ENCODE measurements at regions of chr2 and their contacts with region 1.

Region 1: GRCh38 chr2:61176755-61177726 is 15.1 kb downstream of the C2orf74 start:
- DNase-seq: peak; percentile 97 to 99
- ATAC-seq: peak; percentile 88 to 94
- H3K4me3 ChIP-seq: peak overlapping the region; percentile 82
- H3K27ac ChIP-seq: peak overlapping the region; percentile 95 to 98
- H3K4me1 ChIP-seq: peaks cover 34% of the 10 kb centered on the region
- CTCF ChIP-seq: peak; percentile 17; the same call in 1 of the 3 replicates
- EP300 ChIP-seq: no peak
- POLR2A ChIP-seq: peak; percentile 98
- RAD21 ChIP-seq: peak in 1 of 2 experiments; percentile 30; a peak in 2 of 5 replicates

Region 2: DNA sequence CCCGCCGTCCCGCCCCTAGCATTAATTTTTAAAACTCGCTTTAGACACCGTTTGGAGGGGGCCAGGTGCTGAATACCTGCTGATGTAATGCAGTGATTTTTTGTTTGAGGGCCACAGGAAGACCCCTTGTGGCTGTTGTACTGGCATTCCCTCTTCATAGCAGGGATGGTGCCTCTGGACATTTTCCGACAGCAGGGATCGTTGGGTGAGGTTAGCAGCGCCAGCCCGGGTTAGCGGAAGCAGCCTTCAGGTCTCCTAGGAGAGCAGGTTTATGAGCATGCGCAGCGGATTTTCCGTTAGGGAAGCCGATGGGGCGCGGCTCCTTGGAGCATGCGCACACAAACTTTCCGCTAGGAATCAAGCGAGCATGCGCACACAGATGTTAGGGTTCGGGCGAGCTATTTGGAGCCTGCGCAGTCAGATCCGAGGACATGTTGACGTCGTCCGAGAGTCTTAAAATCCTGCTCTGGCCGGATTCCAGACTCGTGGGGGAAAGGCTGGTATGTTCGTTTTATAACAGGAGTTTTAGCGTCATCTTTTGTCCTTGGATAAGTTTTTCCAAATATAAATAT is 32.3 kb before region 1 on chr2:
- CTCF ChIA-PET with region 1: interaction called, 3 read pairs
- POLR2A ChIA-PET with region 1: interaction called, 16 read pairs
- DNase-seq: peak; percentile 99
- ATAC-seq: peak; percentile 99
- H3K4me3 ChIP-seq: peak overlapping the region; percentile 56
- H3K27ac ChIP-seq: peak overlapping the region; percentile 79 to 92
- H3K4me1 ChIP-seq: no peaks in the 10 kb centered on the region
- CTCF ChIP-seq: no peak
- EP300 ChIP-seq: no peak
- POLR2A ChIP-seq: peak; percentile 87
- RAD21 ChIP-seq: no peak

Region 3: DNA sequence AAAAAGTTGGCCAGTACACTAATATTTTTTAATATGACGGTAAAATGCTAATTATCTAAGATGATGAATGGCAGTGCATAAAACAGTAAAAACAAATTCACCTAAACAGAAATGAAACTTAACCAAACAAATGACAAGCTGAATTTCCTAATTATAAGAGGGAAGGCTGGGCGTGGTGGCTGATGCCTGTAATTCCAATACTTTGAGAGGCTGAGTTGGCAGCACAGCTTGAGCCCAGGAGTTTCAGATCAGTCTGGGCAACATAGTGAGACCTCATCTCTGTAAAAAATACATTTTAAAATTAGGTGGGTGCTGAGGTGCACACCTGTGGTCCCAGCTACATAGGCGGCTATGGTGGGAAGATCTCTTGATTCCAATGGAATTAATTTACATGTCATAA is 173.7 kb after region 1 on chr2:
- CTCF ChIA-PET with region 1: no interaction called
- POLR2A ChIA-PET with region 1: no interaction called
- DNase-seq: no peak
- ATAC-seq: no peak
- H3K4me3 ChIP-seq: no peak overlapping the region
- H3K27ac ChIP-seq: no peak overlapping the region
- H3K4me1 ChIP-seq: no peaks in the 10 kb centered on the region
- CTCF ChIP-seq: no peak
- EP300 ChIP-seq: no peak
- POLR2A ChIP-seq: no peak
- RAD21 ChIP-seq: no peak

Region 4: DNA sequence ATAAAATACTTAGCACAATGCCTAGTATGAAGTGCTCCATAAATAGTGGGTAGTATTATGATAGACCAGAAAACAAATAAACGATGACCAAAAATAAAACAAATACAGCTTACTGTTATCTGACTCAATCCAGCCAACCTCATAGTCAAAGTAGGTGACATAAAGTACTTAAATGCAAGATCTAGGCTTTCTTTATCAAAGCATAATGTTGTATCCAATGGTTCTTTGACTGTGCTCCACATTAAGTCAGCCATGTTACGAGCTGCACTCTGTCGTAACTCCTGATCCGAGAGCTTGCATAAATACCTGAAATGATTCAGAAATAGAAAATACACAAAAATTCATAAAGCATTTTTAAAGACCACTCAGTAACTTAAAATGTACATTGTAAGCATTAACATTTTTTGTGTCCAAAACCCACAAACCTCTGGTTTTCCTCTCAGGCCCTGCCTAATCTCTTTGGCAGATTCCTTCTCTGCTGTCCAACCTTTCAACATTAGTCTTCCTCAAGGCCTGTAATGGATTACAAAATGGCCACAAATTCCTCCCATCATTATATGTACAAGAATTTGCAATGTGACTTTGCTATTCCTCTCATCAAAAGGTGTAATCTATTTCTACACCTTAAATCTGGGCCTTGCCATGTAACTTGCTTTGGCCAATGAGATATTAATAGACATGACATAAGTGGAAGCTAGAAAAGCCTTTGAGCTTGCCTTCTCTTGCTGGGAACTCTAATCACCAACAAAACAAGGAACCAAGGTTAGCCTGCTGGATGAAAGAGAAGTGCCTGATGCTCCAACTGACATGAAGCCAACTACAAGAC is 203.2 kb after region 1 on chr2:
- CTCF ChIA-PET with region 1: no interaction called
- POLR2A ChIA-PET with region 1: no interaction called
- DNase-seq: no peak
- ATAC-seq: no peak
- H3K4me3 ChIP-seq: no peak overlapping the region
- H3K27ac ChIP-seq: no peak overlapping the region
- H3K4me1 ChIP-seq: no peaks in the 10 kb centered on the region
- CTCF ChIP-seq: no peak
- EP300 ChIP-seq: no peak
- POLR2A ChIP-seq: no peak
- RAD21 ChIP-seq: no peak

Measured in A549 (cell line).